ENCODE measurements at regions of chr9 and their contacts with region 1.

Region 1: DNA sequence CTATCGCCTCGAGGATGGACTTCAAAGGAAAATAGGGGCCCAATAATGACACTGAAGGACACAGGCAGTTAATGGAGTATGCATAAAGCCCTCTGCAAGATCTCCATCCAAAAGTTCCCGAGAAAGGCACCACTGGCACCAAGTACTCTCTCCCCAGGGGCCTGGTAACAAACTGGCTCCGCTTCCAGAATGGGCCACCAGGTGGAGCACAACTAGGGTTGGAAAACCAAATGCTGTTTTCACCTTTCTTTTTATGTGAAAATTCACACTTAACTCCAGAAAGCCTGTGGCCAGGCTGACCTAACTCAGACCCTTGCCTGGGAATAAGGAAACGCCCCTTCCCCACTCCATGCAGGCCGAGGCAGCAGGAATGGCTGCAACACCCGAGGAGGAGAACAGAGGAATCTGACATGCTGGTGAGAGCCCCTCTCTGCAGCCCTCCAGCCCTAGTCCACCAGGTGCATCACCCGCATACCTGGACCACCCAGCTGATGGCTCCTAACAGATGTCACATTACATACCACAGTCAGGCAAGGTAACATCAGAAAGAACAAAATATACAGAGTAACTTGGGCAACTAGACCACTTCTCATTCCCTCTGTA is 42.8 kb downstream of the CAMSAP1 start:
- DNase-seq: peak; percentile 75 to 91
- ATAC-seq: no peak
- H3K4me3 ChIP-seq: no peak overlapping the region
- H3K27ac ChIP-seq: no peak overlapping the region
- H3K4me1 ChIP-seq: no peaks in the 10 kb centered on the region
- H3K27me3 ChIP-seq: no peaks in the 10 kb centered on the region

Region 2: DNA sequence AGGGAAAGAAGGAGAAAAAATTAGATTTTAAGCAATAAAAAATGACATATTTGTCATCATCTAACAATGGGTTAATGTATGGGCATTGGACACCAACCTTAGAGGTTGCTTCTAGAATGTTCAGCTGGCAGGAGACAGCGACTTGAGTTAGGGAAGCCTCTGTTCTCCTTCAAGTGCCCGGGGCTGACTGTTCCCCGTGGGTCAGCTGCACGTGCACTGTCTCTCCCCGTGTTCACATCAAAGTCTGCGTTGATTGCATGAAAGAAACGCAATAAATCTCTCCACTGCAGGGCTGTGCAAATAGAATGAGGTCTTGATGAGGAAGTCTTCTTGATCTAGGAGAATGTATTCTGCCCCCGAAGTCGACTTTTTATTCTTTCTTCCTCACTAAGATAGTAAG is 225.4 kb before region 1 on chr9 and contains the start of gene GLT6D1:
- intact Hi-C with region 1: no loop called
- DNase-seq: no peak
- ATAC-seq: no peak
- H3K4me3 ChIP-seq: no peak within 1 kb of the TSS
- H3K27ac ChIP-seq: no peak within 1 kb of the TSS
- H3K4me1 ChIP-seq: no peaks in the 10 kb centered on the region
- H3K27me3 ChIP-seq: no peaks in the 10 kb centered on the region
- total RNA-seq, gene GLT6D1: not detected

Region 3: DNA sequence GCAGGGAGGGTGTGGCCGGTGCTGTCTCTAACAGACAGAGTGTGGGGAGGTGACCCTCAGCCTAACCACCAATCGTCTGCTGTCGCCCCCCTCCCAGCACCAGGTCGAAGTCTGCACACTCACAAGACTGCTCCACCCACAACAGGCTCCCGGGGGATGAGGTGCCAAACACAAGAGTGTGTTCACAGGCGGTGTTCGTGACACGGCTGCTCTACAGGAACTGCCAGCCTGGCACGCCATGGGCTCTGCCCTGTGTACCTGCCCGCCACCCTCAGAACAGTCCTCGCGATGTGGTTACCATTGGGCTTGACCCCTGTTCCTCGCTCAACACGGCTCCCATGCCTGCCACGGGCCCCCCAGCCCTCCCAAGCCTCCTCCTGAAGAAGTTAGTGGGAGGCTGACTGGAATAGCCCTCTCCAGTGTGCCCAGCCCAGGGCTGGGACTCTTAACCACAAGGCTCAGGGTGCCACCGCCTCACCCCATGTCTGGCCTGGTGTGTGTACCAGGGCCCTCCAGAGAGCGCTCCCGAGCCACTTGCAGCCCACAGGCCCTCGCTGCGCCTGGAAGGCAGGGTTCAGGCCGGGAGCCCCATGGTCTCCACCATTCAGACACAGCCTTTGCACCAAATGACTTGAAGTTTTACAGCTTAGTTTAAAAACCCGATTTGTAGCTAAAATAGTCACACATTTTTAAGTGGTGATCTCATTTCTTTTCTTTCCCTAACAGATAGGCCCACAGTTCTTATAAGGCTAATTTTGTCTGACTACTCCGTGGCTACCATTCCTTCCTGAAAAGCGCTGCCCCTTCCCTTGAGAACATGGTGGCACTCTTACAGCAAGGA is 59.7 kb before region 1 on chr9:
- intact Hi-C with region 1: no loop called
- DNase-seq: peak in 1 of 2 donors; percentile 32
- ATAC-seq: peak; percentile 15
- H3K4me3 ChIP-seq: no peak overlapping the region
- H3K27ac ChIP-seq: peak overlapping the region in 1 of 2 donors; percentile 4
- H3K4me1 ChIP-seq: no peaks in the 10 kb centered on the region
- H3K27me3 ChIP-seq: no peaks in the 10 kb centered on the region

Region 4: DNA sequence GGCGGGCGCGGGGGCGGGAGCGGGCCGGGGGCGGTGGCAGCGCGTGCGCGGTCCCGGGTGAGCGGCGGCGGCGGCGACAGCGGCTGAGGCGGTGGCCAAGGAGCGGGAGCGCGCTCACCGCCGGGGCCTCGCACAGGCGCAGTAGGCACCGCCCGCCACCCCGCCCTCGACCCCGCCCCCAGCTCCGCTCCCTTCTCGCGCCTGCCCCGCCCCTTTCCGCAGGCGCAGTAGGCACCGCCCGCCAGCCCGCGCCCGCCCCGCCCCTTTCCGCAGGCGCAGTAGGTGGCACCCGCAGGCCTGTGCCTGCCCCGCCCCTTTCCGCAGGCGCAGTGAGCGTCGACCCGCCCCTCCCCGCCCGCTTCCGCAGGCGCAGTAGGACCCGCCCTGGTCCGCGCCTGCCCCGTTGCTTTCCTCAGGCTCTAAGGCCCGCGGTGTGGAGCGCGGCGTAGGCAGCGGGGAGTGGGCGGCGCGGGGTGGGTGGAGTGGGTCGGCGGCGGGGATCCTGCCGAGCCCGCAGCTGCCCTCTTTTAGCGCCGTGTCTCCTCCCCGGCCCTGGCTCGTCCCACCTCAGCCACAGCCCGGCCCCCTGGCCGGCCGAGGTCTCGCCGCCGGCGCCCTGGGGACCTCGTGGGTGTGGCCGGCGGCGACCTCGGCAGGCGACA is 43.0 kb after region 1 on chr9 and contains the start of gene CAMSAP1:
- intact Hi-C with region 1: loop called in 1 of 2 experiments (anchors 5 kb)
- DNase-seq: peak; percentile 95 to 97
- ATAC-seq: peak; percentile 99
- H3K4me3 ChIP-seq: peak within 1 kb of the TSS; percentile 85 to 98
- H3K27ac ChIP-seq: peak within 1 kb of the TSS in 1 of 2 donors; percentile 23
- H3K4me1 ChIP-seq: no peaks in the 10 kb centered on the region
- H3K27me3 ChIP-seq: no peaks in the 10 kb centered on the region
- total RNA-seq, gene CAMSAP1: 26.4 to 28.0 TPM

Region 5: DNA sequence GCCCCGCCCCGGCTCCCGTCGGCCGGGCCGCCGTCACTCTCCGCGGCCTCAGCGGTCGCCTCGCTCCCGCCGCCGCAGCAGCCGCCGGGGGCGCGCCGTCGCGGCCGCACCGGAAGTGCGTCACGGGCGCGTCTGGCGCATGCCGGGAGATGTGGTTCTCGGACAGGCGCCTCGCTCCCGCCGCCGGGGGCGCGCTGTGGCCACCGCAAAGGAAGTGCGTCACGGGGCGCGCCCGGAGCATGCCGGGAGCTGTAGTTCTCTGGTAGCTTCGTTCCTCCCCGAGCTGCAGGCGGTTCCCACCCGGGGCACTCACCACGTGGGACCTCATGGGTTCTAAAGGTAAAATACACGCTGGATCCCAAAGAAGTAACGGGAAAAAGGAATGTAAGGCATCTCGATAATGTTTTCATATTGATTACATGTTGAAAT is 96.7 kb after region 1 on chr9 and contains the start of gene UBAC1:
- intact Hi-C with region 1: loop called in 1 of 2 experiments (anchors 10 kb)
- DNase-seq: peak; percentile 98 to 99
- ATAC-seq: peak; percentile 96
- H3K4me3 ChIP-seq: peak within 1 kb of the TSS; percentile 80 to 95
- H3K27ac ChIP-seq: peak within 1 kb of the TSS in 1 of 2 donors; percentile 50
- H3K4me1 ChIP-seq: no peaks in the 10 kb centered on the region
- H3K27me3 ChIP-seq: no peaks in the 10 kb centered on the region
- total RNA-seq, gene UBAC1: 24.1 to 38.0 TPM

Region 6: DNA sequence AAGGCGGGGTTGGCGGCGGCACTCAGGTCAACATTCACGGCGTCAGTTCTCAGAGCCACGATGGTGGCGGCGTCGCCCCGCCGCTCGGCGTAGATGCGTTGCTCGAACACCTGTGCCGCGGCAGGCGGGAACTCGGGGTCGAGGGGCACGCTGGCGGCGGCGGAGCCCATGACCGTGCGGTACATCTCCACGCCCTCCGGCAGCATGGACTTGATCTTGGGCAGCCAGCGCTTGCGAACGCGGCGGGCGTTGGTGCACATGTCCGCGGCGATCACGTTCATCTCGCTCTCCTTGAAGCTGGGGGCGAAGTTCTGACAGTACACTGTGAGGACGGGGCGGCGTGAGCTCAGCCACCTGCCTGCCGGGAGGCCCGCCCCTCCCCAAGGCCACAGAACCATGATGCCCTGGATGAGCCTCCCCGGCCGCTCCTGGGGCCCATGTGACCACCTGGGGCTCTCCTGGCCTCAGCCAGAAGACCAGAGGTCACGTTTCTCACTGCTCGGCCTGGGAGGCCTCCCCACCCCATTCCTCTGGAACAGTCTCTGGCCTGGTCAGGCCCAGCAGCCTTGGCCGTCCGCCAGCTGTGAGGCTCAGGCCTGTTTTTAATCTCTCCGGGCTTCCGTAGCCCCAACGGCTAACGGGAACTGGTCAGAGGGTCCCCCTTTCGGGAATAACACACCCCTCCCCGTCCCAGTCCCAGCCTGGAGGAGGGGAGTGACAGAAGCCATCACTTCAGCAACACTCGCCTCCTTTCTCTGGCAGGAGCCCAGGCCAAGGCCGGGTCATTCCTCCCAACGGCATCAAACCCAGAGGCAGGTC is 147.4 kb after region 1 on chr9:
- intact Hi-C with region 1: no loop called
- DNase-seq: peak; percentile 88 to 92
- ATAC-seq: peak; percentile 78
- H3K4me3 ChIP-seq: no peak overlapping the region
- H3K27ac ChIP-seq: no peak overlapping the region
- H3K4me1 ChIP-seq: no peaks in the 10 kb centered on the region
- H3K27me3 ChIP-seq: no peaks in the 10 kb centered on the region

Region 7: GRCh38 chr9:136512651-136513071 is 648.1 kb after region 1 on chr9:
- intact Hi-C with region 1: no loop called
- DNase-seq: no peak
- ATAC-seq: no peak
- H3K4me3 ChIP-seq: no peak overlapping the region
- H3K27ac ChIP-seq: no peak overlapping the region
- H3K4me1 ChIP-seq: no peaks in the 10 kb centered on the region
- H3K27me3 ChIP-seq: no peaks in the 10 kb centered on the region

Measured in aorta (tissue), 5 donors.